ENCODE measurements at regions of chr1 and their contacts with region 1.

Region 1: DNA sequence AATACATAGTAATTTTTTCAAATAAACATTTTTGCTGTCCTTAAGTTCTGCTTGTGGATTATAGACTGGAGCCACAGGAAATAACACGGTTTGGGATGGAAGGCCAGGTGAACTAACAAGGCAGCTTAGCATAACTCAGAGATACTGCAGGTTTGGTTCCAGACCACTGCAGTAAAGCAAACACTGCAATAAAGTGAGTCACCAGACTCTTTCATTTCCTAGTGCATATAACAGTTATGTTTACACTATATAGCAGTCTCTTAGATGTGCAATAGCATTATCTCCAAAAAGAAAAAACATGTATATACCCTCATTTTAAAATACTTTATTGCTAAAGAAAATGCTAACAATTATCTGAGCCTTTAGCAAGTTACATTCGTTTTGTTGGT is 22.0 kb downstream of the LRRC42 start:
- DNase-seq: no peak
- H3K4me3 ChIP-seq: no peak overlapping the region
- H3K27ac ChIP-seq: no peak overlapping the region
- H3K4me1 ChIP-seq: no peaks in the 10 kb centered on the region
- H3K27me3 ChIP-seq: no peaks in the 10 kb centered on the region
- CTCF ChIP-seq: no peak

Region 2: DNA sequence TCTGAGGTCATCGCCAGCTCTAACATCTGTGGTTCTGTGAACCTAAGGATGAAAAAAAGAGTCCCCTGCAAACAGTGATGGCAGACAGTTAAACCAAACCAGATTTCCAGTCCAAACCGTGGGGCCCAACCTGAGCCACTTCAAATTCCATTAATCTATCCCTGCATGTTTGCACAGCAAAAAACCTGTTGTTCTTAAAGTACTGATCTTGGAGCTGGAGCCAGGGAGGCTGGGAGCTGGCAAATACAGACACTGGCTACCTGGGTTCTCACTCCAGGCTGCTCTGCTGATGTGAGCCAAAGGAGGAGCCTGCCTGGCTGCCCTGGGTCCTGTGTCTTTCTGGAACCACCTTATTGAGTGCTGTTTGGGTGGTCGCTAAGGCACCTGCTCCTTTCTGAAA is 33.5 kb after region 1 on chr1:
- CTCF ChIA-PET with region 1: no interaction called
- POLR2A ChIA-PET with region 1: interaction called, 11 read pairs
- intact Hi-C with region 1: no loop called
- DNase-seq: no peak
- H3K4me3 ChIP-seq: no peak overlapping the region
- H3K27ac ChIP-seq: no peak overlapping the region
- H3K4me1 ChIP-seq: no peaks in the 10 kb centered on the region
- H3K27me3 ChIP-seq: no peaks in the 10 kb centered on the region
- CTCF ChIP-seq: no peak

Measured in PC-9 (cell line).